Activated CD4-positive, alpha-beta T cell treated with anti-CD3 and anti-CD28 coated beads for 36 hours (primary cell): ENCODE measurements at regions of chr20 and their contacts with region 1.

Region 1: DNA sequence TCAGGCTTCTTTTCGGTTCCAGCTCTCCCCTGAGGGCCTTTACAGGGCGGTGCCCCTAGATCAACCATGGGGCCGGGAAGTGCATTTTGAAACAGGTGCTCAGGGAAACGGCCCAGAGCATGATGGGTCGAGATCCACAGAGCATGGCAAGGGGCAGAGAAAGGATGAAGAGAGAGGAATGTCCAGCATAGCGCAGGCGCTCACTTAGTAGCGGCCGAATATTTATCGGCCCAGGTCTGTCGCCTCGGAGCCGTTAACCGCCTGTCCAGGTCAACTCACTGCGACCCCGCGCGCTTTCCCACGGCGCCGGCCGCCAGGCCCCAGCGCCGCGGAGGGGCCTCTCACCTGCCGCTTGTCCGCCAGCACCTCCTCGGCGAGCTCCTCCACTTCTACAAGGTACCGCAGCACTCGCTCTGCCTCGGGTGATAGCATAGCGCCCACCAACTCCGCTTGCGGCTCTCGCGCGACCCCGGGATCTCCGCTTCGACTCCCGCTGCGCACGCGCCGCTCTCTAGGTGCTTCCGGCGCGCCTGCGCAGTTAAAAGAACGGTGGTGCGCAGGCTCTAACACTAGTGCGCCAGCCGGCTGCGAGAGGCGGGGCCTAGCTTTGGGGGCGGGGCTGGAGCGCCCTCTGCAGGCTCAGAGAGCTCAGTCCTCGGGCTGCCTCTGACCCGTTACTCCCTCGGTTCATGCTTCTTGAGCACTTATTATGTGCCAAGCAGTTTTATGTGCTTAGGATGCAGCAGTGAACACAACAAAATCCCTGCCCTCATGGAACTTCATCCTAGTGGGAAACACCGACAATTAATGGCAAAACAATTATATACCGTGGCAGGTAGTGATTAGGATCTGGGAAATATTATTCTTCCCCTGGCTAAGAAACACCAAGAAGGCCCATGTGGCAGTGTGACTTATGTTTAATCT is at the start of gene PDRG1:
- DNase-seq: peak; percentile 98
- ATAC-seq: peak; percentile 99
- H3K4me3 Mint-ChIP-seq: peak within 1 kb of the TSS; percentile 97
- H3K27ac Mint-ChIP-seq: peak within 1 kb of the TSS; percentile 95
- H3K4me1 Mint-ChIP-seq: peaks cover 26% of the 10 kb centered on the region
- H3K27me3 Mint-ChIP-seq: peaks cover 5% of the 10 kb centered on the region
- total RNA-seq, gene PDRG1: 12.8 to 18.4 TPM

Region 2: DNA sequence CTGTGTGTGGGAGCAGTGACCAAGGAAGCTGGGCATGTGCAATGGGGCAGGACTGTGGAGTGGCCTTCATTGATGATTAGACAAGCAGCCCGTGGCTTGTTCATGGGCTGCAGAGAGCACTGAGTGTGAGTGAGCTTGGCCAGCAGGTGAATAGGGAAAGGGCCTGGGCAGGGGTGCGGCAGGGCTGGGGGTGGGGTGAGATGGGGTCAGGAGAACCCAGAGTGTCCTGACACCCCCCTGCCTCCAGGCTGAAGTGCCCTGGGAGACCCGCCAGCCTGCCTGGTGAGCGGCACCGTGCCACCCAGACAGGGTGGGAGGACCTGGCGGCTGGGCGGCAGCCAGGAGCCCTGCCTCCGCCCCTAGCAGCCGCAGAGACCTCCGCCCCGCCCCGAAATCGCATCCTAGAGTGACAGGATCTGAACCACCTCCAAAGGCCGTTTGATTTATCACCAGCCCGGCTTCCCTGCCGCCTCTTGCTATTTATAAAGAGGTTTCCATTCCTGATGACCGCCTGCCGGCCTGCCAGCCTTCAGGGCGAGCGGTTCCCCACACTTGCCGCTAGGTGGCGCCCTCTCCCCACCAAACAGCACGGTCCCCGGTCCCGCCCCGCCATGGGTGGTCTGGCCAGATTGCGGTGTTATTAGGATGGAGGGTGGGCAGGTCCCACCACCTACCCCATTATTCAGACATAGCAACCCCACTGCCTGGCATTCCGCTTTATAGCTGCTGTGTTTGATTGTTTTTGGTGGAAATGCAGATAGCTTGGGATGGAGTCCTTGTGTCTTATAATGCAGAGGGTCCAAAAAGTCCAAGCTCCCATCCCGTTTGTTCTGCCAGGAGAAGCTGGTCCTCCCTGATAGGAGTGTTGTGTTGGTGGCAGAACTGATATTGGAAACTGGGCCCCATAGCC is 129.1 kb before region 1 on chr20:
- CTCF ChIA-PET with region 1: interaction called, 28 read pairs
- POLR2A ChIA-PET with region 1: no interaction called
- intact Hi-C with region 1: loop called in 1 of 2 experiments (anchors 10 kb)
- DNase-seq: peak; percentile 86
- ATAC-seq: peak; percentile 90
- H3K4me3 Mint-ChIP-seq: no peak overlapping the region
- H3K27ac Mint-ChIP-seq: no peak overlapping the region
- H3K4me1 Mint-ChIP-seq: peaks cover 4% of the 10 kb centered on the region
- H3K27me3 Mint-ChIP-seq: no peaks in the 10 kb centered on the region

Region 3: DNA sequence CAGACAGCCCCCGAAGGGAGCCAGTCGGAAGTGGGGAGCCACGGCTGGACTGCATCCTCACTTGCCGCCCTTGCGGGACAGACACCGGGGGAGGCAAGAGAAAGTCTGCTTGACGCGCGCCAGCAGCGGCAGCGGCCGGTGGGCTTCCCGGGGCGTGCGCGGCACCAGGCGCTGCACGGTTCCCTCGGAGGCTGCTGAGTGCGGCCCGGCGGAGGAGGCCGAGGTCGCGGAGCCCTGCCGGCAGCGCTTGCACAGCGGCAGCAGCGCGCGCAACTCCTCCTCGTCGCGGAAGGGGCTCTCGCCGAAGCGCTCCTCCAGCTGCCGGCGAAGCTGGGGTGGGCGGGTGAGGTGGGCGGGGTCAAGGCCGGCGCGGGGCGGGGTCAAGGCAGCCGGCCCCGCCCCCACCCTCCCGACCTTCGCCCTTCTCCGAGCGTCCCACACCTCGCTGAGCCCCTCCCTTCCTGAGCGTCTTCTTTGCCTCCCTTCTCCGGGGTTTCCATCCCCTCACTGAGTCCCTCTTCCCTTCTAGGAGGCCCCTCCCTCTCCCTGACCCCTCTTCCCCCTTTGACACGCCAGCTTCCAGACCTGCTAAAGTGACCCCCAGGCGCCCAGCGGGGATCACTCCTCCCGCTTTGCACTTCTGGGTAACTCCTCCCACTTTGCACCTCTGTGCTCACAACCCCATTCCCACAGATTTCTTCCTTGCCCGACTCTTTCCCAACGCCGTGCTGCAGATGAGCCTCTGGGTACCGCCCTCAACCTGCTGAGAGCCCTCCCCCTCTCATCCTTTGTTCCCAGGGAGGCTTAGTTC is 90.2 kb before region 1 on chr20:
- CTCF ChIA-PET with region 1: interaction called, 4 read pairs
- POLR2A ChIA-PET with region 1: no interaction called
- intact Hi-C with region 1: loop called in 1 of 2 experiments (anchors 1 kb)
- DNase-seq: peak; percentile 84
- ATAC-seq: peak; percentile 97
- H3K4me3 Mint-ChIP-seq: peak overlapping the region; percentile 24
- H3K27ac Mint-ChIP-seq: no peak overlapping the region
- H3K4me1 Mint-ChIP-seq: peaks cover 8% of the 10 kb centered on the region
- H3K27me3 Mint-ChIP-seq: peaks cover 26% of the 10 kb centered on the region

Region 4: DNA sequence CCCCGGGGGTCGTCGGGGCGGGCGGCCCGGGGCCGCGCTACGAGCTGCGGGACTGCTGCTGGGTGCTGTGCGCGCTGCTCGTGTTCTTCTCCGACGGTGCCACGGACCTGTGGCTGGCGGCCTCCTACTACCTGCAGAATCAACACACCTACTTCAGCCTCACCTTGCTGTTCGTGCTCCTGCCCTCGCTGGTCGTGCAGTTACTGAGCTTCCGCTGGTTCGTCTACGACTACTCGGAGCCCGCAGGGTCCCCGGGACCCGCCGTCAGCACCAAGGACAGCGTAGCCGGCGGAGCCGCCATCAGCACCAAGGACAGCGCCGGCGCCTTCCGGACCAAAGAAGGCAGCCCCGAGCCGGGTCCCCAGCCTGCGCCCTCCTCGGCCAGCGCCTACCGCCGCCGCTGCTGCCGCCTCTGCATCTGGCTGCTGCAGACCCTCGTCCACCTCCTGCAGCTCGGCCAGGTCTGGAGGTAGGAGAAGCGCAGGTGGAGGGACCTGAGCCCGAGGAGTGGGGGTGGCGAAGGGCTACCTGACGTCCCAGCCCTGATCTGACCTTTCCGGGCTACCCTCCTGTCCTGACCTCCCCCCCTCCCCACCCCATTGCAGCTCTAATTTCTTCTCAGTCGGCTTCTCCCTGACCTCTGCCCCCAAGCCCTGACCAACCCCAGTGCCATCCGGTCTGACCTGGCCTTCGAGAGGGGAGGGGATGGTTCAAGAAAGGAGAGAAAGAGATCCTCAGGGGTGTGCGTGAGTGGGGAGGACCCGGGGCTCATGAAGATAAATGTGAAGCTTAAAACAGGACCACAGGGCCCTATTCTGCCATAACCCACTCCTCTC is 16.7 kb after region 1 on chr20:
- CTCF ChIA-PET with region 1: interaction called, 4 read pairs
- POLR2A ChIA-PET with region 1: no interaction called
- intact Hi-C with region 1: loop called in 1 of 2 experiments (anchors 1 kb)
- DNase-seq: peak; percentile 89
- ATAC-seq: peak; percentile 87
- H3K4me3 Mint-ChIP-seq: peak overlapping the region; percentile 70
- H3K27ac Mint-ChIP-seq: no peak overlapping the region
- H3K4me1 Mint-ChIP-seq: peaks cover 2% of the 10 kb centered on the region
- H3K27me3 Mint-ChIP-seq: peaks cover 53% of the 10 kb centered on the region

Region 5: DNA sequence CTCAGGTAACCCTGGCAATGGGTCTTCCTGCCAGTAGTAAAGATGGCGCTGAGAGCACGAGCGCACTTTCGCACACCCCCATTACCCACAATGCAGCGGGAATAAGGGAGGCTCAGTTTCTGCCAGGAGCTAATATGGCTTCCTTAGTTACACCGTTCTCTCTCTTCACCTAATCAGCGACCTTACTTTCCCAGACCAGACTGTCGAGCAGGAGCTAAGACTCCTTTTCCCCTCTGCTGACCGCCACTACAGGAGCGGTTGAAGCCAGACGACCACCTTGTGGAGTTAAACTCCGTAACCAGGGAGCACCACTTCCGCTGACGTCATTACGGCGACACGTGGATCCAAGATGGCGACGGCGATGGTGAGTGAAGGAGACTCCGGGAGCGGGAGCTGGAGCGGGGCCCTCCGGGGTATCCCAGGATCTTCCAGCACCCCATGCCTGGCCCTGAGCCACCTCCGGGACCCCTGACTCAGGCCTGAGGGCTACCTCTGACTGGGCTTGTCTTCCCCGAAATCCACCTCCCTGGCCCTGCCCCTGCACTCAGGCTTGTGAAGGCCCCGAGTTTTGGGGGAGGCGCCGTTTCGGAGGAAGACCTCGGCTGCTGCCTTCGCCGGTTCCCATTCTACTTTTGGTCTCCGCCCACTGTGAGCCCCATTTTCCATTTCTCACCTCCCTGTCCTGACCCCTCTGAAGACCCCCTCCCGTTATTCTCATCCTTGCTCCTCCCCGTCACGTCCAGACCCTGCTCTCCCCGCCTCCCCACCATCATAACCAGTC is 157.8 kb after region 1 on chr20 and contains the start of gene TM9SF4:
- CTCF ChIA-PET with region 1: no interaction called
- POLR2A ChIA-PET with region 1: no interaction called
- intact Hi-C with region 1: loop called in 1 of 2 experiments (anchors 1 kb)
- DNase-seq: peak; percentile 93
- ATAC-seq: peak; percentile 88
- H3K4me3 Mint-ChIP-seq: peak within 1 kb of the TSS; percentile 97
- H3K27ac Mint-ChIP-seq: peak within 1 kb of the TSS; percentile 99
- H3K4me1 Mint-ChIP-seq: peaks cover 34% of the 10 kb centered on the region
- H3K27me3 Mint-ChIP-seq: no peaks in the 10 kb centered on the region
- total RNA-seq, gene TM9SF4: 43.2 to 66.5 TPM